ENCODE measurements at regions of chr9 and their contacts with region 1.

Region 1: GRCh38 chr9:71683598-71684235 is 84.6 kb downstream of the CEMIP2 start:
- H3K4me3 Mint-ChIP-seq: no peak overlapping the region
- H3K27ac Mint-ChIP-seq: peak overlapping the region; percentile 68
- H3K4me1 Mint-ChIP-seq: peaks cover 51% of the 10 kb centered on the region
- H3K27me3 Mint-ChIP-seq: peaks cover 3% of the 10 kb centered on the region

Region 2: GRCh38 chr9:71638627-71639026 is 45.1 kb before region 1 on chr9:
- intact Hi-C with region 1: loop called (anchors 5 kb)
- H3K4me3 Mint-ChIP-seq: peak overlapping the region; percentile 18
- H3K27ac Mint-ChIP-seq: peak overlapping the region; percentile 92
- H3K4me1 Mint-ChIP-seq: peaks cover 32% of the 10 kb centered on the region
- H3K27me3 Mint-ChIP-seq: no peaks in the 10 kb centered on the region